Activated CD8-positive, alpha-beta T cell treated with anti-CD3 and anti-CD28 coated beads, Interleukin-2, amount 10 ng/mL, durations not matched to agents 7 days and 5 days (primary cell): ENCODE measurements at regions of chr5 and their contacts with region 1.

Region 1: GRCh38 chr5:54229041-54229780 is 81.2 kb downstream of the ARL15 start:
- DNase-seq: peak; percentile 81
- ATAC-seq: peak; percentile 75
- H3K4me3 Mint-ChIP-seq: no peak overlapping the region
- H3K27ac Mint-ChIP-seq: no peak overlapping the region
- H3K4me1 Mint-ChIP-seq: no peaks in the 10 kb centered on the region
- H3K27me3 Mint-ChIP-seq: no peaks in the 10 kb centered on the region

Region 2: GRCh38 chr5:53481887-53482716 is 747.1 kb before region 1 on chr5:
- CTCF ChIA-PET with region 1: interaction called, 16 read pairs
- POLR2A ChIA-PET with region 1: no interaction called
- DNase-seq: peak; percentile 80
- ATAC-seq: peak; percentile 84
- H3K4me3 Mint-ChIP-seq: peak overlapping the region; percentile 81
- H3K27ac Mint-ChIP-seq: peak overlapping the region; percentile 64
- H3K4me1 Mint-ChIP-seq: peaks cover 34% of the 10 kb centered on the region
- H3K27me3 Mint-ChIP-seq: peaks cover 55% of the 10 kb centered on the region

Region 3: DNA sequence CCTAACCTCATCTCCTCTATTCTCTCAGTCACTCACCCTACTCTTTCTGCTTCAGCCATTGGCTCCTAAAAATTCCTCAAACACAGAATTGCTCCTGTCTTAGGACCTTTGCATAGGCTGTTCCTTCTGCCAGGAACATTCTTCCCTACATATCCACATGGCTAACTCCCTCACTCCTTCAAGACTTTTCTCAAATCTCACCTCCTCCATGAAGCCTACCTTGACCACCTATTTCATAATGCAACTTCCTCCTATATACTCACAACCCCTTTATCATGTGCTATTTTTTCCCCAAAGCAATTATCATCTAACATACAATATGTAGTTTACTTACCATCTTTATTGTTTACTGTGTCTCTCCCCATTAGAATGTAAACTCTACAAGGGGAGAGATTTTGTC is 35.4 kb after region 1 on chr5:
- CTCF ChIA-PET with region 1: no interaction called
- POLR2A ChIA-PET with region 1: no interaction called
- DNase-seq: no peak
- ATAC-seq: no peak
- H3K4me3 Mint-ChIP-seq: no peak overlapping the region
- H3K27ac Mint-ChIP-seq: no peak overlapping the region
- H3K4me1 Mint-ChIP-seq: no peaks in the 10 kb centered on the region
- H3K27me3 Mint-ChIP-seq: no peaks in the 10 kb centered on the region